Activated CD4-positive, alpha-beta T cell treated with anti-CD3 and anti-CD28 coated beads, Interleukin-2, amount 10 ng/mL, durations not matched to agents 24 days and 14 days (primary cell): ENCODE measurements at regions of chr1 and their contacts with region 1.

Region 1: DNA sequence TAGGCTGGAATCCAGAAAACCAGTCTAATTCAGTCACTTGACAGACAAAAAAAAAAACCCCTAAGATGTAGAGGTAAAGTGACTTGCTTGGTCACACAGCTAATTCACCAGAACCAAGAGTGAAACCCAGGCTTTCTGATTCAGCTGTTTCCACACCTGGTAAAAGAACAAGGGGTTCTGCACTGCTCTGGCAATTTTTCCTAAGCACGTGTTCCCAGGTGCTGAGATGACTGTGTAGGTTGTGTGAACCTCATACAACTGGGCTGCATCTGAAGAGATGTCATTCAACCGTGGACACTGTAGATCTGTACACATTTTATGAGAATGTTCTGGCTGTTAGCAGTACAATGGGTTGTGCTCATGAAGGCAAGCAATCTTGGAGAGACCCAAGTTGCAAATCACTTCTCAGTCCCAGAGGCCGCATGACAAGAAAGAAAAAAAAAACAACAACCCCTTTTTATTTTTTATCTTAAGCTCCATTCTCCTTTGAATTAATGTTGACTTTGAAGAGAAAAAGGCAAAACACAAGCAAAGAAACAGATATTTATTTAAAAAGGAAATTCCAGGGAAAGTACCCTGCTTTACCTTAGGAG is 95.4 kb downstream of the INTS7 start:
- DNase-seq: peak; percentile 79
- H3K4me3 Mint-ChIP-seq: peak overlapping the region; percentile 26
- H3K27ac Mint-ChIP-seq: peak overlapping the region; percentile 34
- H3K4me1 Mint-ChIP-seq: peaks cover 35% of the 10 kb centered on the region
- H3K27me3 Mint-ChIP-seq: no peaks in the 10 kb centered on the region

Region 2: DNA sequence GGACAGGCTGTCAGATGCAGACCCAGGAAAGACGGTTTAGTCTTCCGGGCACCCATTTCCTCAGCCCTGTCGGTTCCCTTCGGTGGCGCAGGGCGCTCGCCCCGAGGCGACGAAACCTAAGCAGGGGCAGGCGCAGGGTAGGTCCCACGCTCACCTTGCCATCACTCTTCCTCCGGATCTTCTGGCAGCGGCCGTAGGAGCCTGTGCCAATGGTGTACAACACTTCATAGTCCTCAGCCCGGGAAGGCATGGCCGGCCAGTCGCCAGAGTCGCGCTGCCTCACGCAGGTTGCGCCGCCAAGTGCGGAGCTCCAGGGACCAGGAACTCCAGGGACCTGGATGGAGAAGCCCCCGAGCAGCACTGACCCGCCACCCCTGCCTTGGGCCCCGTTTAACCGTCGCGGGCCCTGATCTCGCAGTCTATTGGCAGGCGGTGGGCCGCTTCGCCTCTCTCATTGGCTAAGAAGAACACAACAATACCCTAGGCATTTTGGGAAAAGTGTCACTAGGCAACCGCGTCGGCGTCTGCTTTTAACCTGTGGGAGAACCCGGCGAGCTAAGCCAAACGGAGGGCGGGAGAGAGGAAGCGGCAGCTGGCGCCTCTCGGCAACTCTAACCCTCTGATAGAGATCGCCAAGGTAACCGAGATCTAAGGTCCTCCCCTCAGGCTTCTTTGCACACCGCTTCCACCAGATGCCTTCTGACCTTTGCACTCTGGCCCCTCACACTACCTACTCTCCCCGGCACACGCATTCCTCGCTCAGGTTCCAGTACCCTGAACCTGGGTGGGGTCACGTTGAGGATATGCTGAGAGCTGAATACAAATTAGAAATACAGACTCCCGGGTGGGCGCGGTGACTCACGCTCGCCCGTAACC is 264.5 kb before region 1 on chr1 and contains the start of gene NEK2:
- intact Hi-C with region 1: loop called (anchors 2 kb)
- DNase-seq: peak; percentile 97
- H3K4me3 Mint-ChIP-seq: peak within 1 kb of the TSS; percentile 97
- H3K27ac Mint-ChIP-seq: peak within 1 kb of the TSS; percentile 85
- H3K4me1 Mint-ChIP-seq: peaks cover 28% of the 10 kb centered on the region
- H3K27me3 Mint-ChIP-seq: peaks cover 7% of the 10 kb centered on the region
- total RNA-seq, gene NEK2: 18.0 and 18.2 TPM in 2 replicates

Region 3: GRCh38 chr1:211698161-211699026 is 241.6 kb before region 1 on chr1:
- intact Hi-C with region 1: loop called (anchors 2 kb)
- DNase-seq: peak; percentile 96
- H3K4me3 Mint-ChIP-seq: peak overlapping the region; percentile 63
- H3K27ac Mint-ChIP-seq: no peak overlapping the region
- H3K4me1 Mint-ChIP-seq: peaks cover 30% of the 10 kb centered on the region
- H3K27me3 Mint-ChIP-seq: peaks cover 20% of the 10 kb centered on the region

Region 4: DNA sequence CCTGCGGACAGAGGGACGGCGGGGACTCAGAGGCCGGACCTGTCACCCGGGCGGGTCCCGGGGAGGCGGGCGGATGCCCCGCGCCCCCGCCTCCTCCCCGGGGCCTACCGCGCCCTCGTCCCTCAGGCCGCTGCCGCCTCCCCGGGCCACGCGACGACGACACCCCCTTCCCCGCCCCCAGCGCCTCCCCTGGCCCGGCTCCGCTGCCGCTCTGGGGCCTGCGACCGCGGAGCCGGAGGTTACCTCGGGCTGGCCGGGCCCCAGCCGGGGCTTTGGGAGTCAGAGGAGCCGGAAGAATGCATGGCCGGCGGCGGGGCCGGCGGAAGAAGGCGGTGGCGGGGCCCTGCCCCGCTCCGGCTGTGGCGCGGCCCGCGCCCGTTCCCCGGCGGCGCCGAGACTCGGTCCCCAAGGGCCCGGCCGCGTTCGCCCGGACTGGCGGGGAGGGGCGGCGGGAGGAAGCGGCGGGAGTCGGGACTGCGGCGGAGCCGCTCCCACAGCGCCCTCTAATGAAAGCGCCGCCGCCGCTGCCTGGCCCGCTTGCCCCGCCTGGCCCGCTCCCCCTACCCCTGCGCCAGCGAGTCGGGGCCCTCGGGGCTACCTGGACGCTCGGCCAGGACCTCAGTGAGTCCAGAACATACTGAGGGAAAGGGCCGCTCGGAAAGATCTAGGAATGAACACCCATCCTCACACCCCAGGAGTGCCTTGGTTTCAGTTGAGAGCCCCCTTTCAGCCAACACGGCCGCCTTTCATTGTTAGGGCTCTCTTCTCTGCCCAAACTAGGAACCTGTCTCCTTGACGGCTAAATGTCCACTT is 109.4 kb before region 1 on chr1 and contains the start of gene LPGAT1:
- intact Hi-C with region 1: loop called (anchors 1 kb)
- DNase-seq: peak; percentile 91
- H3K4me3 Mint-ChIP-seq: peak within 1 kb of the TSS; percentile 91
- H3K27ac Mint-ChIP-seq: peak within 1 kb of the TSS; percentile 88
- H3K4me1 Mint-ChIP-seq: peaks cover 62% of the 10 kb centered on the region
- H3K27me3 Mint-ChIP-seq: no peaks in the 10 kb centered on the region
- total RNA-seq, gene LPGAT1: 35.6 and 42.1 TPM in 2 replicates

Region 5: DNA sequence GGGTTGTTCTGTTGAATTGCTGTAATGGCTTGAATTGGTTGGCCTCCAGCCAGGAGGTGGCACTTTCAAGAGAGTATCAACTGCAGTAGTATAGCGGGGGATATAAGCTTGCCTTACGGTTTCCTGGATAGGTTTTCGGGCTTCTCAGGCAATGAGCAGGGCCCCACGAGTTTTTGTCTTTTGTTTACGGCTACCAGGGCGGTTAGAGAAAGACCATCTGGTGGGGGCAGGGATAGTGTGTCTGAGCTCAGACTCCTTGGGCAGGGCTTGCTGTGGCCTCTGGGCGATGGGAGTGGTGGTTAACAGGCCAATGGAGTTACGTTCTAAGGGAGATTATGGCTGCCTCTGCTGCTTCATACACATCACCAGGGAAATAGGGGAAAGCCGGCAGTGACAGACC is 158.3 kb after region 1 on chr1:
- intact Hi-C with region 1: no loop called
- DNase-seq: no peak
- H3K4me3 Mint-ChIP-seq: no peak overlapping the region
- H3K27ac Mint-ChIP-seq: no peak overlapping the region
- H3K4me1 Mint-ChIP-seq: peaks cover 38% of the 10 kb centered on the region
- H3K27me3 Mint-ChIP-seq: no peaks in the 10 kb centered on the region

Region 6: GRCh38 chr1:212302745-212303383 is 362.9 kb after region 1 on chr1:
- intact Hi-C with region 1: loop called (anchors 5 kb)
- DNase-seq: no peak
- H3K4me3 Mint-ChIP-seq: no peak overlapping the region
- H3K27ac Mint-ChIP-seq: peak overlapping the region; percentile 32
- H3K4me1 Mint-ChIP-seq: peaks cover 33% of the 10 kb centered on the region
- H3K27me3 Mint-ChIP-seq: no peaks in the 10 kb centered on the region

Region 7: DNA sequence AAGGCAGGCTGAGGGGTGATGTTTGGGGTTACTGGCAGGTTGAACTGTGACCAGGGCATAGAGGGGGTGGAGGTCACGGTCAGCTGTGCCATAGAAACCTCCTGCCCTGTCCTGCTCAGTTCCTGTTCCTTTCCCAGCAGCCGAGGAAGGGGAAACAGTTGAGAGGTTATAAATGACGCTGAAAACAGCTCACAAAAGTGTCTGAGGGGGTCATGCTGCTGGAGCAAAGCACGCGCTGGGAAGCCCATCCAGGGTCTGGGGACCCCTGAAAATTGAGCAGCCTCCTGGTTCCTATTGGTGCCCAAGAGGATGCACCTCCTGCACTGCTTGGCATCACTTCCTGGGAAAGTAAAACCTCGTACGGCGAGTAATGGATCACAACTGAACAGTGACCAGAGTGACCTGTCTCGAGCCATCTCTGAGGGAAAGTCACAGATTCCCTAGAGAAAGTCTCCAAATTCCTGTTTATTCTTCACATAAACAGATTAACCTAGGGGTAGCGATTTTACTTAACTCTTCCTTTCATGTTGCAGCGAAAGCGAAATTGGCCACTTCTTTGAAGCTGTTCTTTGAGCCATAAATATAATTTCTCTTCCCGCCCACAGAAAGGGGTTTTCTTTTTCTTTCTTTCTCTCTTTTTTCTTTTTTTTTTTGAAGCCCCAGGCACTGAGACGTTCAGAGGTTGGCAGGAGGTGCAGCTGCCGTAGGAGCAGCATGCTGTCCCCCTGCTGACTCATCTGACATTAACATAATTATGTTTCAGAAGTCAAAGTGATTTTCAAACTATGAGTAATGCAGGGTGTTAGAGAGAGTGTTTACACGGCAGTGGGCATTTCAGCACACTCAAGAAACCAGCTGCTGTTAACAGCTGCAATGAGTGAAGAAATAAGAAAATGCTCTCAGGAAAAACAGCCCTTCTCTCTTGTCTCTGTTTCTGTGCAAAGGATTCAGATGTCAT is 626.8 kb after region 1 on chr1:
- intact Hi-C with region 1: loop called (anchors 1 kb)
- DNase-seq: peak; percentile 86
- H3K4me3 Mint-ChIP-seq: peak overlapping the region; percentile 81
- H3K27ac Mint-ChIP-seq: peak overlapping the region; percentile 89
- H3K4me1 Mint-ChIP-seq: peaks cover 27% of the 10 kb centered on the region
- H3K27me3 Mint-ChIP-seq: peaks cover 35% of the 10 kb centered on the region